ENCODE measurements at regions of chr2 and their contacts with region 1.

Region 1: DNA sequence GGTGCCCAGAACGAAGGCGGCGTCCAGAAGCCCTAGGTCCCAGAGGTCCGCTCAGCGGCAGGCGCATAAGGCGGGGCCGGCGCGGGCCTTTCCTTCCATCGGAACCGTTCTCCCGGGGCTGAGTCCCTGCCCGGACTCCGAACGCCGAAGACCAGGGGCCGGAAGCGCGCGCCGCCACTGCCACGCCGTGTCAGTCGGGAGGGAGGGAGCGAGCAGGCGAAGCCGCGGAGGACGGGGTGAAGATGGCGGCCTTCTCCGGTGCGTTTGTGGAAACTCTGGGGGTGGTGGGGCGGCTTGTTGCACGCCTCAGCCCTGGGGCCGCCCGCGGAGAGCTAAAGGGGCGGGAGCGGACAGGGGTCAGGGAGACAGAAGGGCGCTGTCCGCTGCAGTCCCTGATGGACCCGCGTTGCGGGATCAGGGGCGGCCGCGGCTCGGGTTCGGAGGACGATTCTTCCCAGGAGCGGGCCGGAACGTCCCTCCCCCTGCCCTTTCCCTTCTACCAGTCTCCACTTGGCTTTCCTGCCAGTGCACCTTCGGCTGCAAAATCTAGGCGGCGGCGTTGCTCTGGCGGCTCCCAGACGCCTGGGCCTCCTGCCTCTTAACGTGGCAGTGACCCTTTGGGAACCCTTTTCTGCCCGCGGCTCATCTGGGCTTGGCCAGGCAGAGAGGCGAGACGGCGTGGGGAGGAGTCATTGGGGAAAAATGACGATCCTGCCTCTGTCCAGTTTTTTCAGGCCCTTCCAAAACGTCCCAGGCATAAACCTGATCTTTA is at the start of gene DDX1:
- DNase-seq: peak; percentile 86 to 93 (median 87)
- ATAC-seq: peak; percentile 82 to 95 (median 94)
- H3K4me3 ChIP-seq: peak within 1 kb of the TSS; percentile 70 to 96 (median 86)
- H3K27ac ChIP-seq: peak within 1 kb of the TSS; percentile 83 to 97 (median 95)
- H3K4me1 ChIP-seq: peaks cover 0 to 35% (median 29%) of the 10 kb centered on the region in 12 donors
- H3K27me3 ChIP-seq: no peaks in the 10 kb centered on the region
- CTCF ChIP-seq: peak in 1 of 12 donors; percentile 8
- POLR2A ChIP-seq: peak in 1 of 2 donors; percentile 77
- total RNA-seq, gene DDX1: 97.7 to 193 (median 142) TPM

Region 2: DNA sequence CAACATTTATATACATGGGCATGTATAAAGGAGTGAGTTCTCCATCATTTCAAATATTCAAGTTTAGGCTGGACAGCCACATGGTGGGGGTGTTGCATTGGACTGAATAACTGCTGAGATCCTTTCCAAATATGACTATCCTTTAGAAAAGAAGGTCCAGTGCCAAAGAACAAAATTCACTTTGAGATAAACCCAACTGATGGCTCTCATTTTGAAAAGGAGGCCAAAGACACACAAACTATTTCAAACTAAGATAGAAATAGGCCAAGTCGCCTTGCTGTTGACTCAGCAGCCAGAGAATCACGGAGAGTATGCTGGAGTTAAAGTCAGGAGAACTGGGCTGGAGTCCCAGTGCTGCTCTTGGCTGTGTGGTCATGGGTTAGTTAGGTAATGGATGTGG is 1163.8 kb before region 1 on chr2:
- intact Hi-C with region 1: loop called in 1 of 10 experiments (anchors 10 kb)
- DNase-seq: peak in 2 of 5 donors; percentile 13 to 33
- ATAC-seq: peak in 3 of 4 donors; percentile 67 to 86 (median 82)
- H3K4me3 ChIP-seq: no peak overlapping the region
- H3K27ac ChIP-seq: no peak overlapping the region
- H3K4me1 ChIP-seq: no peaks in the 10 kb centered on the region
- H3K27me3 ChIP-seq: no peaks in the 10 kb centered on the region
- CTCF ChIP-seq: peak in 8 of 12 donors; percentile 9 to 41 (median 22)
- POLR2A ChIP-seq: no peak

Region 3: DNA sequence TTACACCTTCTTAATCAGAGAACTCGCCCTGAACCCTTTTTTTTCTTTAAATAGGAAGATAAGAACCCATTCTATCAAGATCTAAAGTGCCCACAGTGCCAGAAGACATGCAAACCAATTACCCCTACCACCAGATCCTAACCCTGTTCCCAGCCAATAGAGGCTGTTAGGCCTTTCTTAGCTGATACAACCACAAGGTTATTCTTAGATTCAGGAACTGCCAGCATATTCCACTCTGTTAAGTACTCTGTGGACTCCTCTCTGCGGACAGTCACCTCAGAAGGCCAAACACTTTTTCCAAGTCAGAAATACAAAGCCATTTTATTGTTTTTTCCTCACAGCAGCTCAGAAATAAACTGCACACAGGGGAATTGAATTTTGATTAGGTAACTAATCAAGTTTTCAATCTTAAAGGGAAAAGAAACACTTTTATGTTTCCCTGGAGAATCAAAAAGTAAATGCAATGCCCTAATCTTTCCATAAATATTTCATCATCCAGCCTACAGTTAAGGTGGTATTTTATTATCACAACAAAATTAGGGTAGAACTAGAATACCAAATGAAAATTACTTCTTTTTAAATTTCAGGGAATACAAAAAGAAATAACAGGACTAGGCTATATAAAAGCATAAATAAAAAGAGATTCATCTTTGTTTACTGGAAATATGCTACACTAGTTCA is 142.2 kb before region 1 on chr2:
- intact Hi-C with region 1: no loop called
- DNase-seq: no peak
- ATAC-seq: peak; percentile 91 to 96 (median 94)
- H3K4me3 ChIP-seq: no peak overlapping the region
- H3K27ac ChIP-seq: peak overlapping the region; percentile 32 to 82 (median 74)
- H3K4me1 ChIP-seq: peaks cover 0 to 25% (median 12%) of the 10 kb centered on the region in 12 donors
- H3K27me3 ChIP-seq: no peaks in the 10 kb centered on the region
- CTCF ChIP-seq: no peak
- POLR2A ChIP-seq: no peak

Region 4: GRCh38 chr2:15560988-15561573 is 30.8 kb before region 1 on chr2 and contains the start of gene NBAS:
- intact Hi-C with region 1: loop called in 3 of 10 experiments (anchors 1 to 2 kb)
- DNase-seq: peak; percentile 88 to 90 (median 88)
- ATAC-seq: peak; percentile 94 to 98 (median 97)
- H3K4me3 ChIP-seq: peak within 1 kb of the TSS; percentile 50 to 98 (median 76)
- H3K27ac ChIP-seq: peak within 1 kb of the TSS; percentile 26 to 86 (median 80)
- H3K4me1 ChIP-seq: peaks cover 0 to 31% (median 23%) of the 10 kb centered on the region in 12 donors
- H3K27me3 ChIP-seq: no peaks in the 10 kb centered on the region
- CTCF ChIP-seq: no peak
- POLR2A ChIP-seq: peak in 1 of 2 donors; percentile 39
- total RNA-seq, gene NBAS: 40.4 to 63.0 (median 51.7) TPM